PC-3 (cell line): ENCODE measurements at regions of chr6 and their contacts with region 1.

Region 1: DNA sequence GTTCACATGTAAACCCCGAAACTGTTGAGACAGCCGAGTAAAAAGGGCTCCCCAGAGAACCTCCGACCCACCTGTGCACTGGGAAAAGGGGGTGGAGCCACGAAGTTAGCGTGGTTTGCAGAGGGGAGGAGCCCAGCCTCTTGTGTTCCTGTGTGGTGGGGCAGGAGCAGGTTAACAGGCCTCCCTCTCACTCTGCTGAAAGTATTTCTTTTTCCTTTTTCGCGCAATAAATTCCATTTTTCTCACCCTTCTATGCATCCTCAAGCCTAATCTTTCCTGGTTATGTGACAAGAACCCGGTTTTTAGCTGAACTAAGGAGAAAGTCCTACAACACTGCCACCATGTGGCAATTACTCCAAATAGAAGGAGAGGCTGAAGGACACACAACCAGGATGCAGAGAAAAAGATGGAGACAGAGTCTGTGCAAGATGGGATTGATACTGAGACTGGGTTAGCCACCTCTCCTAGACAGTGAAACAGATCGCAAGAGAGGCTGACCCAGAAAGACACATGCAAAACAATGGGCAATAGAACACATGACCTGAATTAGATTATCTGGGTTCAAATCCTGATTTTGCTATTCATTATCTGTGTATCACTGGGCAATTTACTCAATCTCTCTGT is 168.7 kb upstream of the PRSS16 start:
- DNase-seq: peak; percentile 73
- ATAC-seq: peak; percentile 95
- H3K4me3 ChIP-seq: peak overlapping the region; percentile 68
- H3K27ac ChIP-seq: no peak overlapping the region
- H3K4me1 ChIP-seq: peaks cover 9% of the 10 kb centered on the region; the same call in 1 of the 2 replicates
- H3K27me3 ChIP-seq: no peaks in the 10 kb centered on the region
- CTCF ChIP-seq: peak; percentile 95

Region 2: GRCh38 chr6:26607434-26608230 is 471.2 kb before region 1 on chr6:
- CTCF ChIA-PET with region 1: no interaction called
- POLR2A ChIA-PET with region 1: no interaction called
- intact Hi-C with region 1: loop called (anchors 1 kb)
- DNase-seq: peak; percentile 78
- ATAC-seq: peak; percentile 94
- H3K4me3 ChIP-seq: peak overlapping the region; percentile 72
- H3K27ac ChIP-seq: no peak overlapping the region
- H3K4me1 ChIP-seq: peaks cover 5% of the 10 kb centered on the region
- H3K27me3 ChIP-seq: no peaks in the 10 kb centered on the region
- CTCF ChIP-seq: peak; percentile 92

Region 3: GRCh38 chr6:27019651-27020552 is 58.9 kb before region 1 on chr6:
- CTCF ChIA-PET with region 1: no interaction called
- POLR2A ChIA-PET with region 1: no interaction called
- intact Hi-C with region 1: loop called (anchors 5 kb)
- DNase-seq: peak; percentile 93
- ATAC-seq: peak; percentile 92
- H3K4me3 ChIP-seq: peak overlapping the region; percentile 78
- H3K27ac ChIP-seq: peak overlapping the region; percentile 93
- H3K4me1 ChIP-seq: peaks cover 19% of the 10 kb centered on the region
- H3K27me3 ChIP-seq: no peaks in the 10 kb centered on the region
- CTCF ChIP-seq: no peak

Region 4: GRCh38 chr6:27414996-27415395 is 336.1 kb after region 1 on chr6:
- CTCF ChIA-PET with region 1: no interaction called
- POLR2A ChIA-PET with region 1: no interaction called
- intact Hi-C with region 1: no loop called
- DNase-seq: peak; percentile 52
- ATAC-seq: no peak
- H3K4me3 ChIP-seq: no peak overlapping the region
- H3K27ac ChIP-seq: peak overlapping the region; percentile 42
- H3K4me1 ChIP-seq: peaks cover 11% of the 10 kb centered on the region
- H3K27me3 ChIP-seq: no peaks in the 10 kb centered on the region
- CTCF ChIP-seq: no peak